Sigmoid colon (tissue), 7 donors: ENCODE measurements at regions of chr10 and their contacts with region 1.

Region 1: DNA sequence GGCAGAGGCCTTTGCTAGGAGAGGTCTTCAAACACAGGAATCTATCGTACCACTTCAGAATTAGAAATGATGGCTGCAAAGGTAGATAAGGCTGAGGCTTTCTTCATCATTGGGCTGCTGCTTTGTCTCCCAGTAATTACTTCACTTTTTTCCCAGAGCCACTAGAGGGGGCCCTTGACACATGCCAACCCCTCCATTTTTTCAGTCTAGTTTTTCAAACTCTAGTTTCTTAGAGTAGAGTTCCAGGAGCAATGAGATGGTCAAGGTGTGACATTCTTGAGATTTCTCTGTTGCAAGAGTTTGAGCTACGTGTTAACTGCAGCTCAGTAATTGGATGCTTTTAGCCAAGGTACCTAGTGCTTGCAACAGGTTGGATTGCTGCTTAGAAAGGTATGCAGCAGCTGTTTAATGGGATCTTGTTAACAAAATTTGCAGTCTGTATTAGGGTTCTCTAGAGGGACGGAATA is 33.8 kb upstream of the RBM20 start:
- DNase-seq: no peak
- H3K4me3 ChIP-seq: no peak overlapping the region
- H3K27ac ChIP-seq: no peak overlapping the region
- H3K4me1 ChIP-seq: no peaks in the 10 kb centered on the region
- H3K27me3 ChIP-seq: no peaks in the 10 kb centered on the region
- CTCF ChIP-seq: peak; percentile 38 to 82 (median 66)
- EP300 ChIP-seq: no peak
- POLR2A ChIP-seq: no peak

Region 2: DNA sequence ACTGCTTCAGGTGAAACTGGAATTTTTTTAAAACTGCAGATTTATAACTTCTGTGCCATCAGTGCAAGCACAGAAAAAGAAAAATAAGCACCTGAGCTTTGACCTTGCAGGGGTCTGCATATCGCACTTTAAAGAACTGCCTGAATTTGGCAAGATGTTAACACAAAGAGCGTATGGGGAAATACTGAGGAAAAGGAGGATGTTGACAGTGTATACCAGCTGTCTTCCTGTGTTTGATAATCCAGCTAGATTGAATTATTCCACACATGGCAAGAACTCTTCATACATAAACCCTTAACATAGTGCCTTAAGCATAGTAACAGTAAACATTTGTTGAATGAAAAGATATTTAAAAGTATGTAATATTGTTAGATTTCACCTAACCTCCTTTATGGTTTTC is 12.9 kb before region 1 on chr10:
- intact Hi-C with region 1: no loop called
- DNase-seq: no peak
- H3K4me3 ChIP-seq: no peak overlapping the region
- H3K27ac ChIP-seq: no peak overlapping the region
- H3K4me1 ChIP-seq: peaks cover 0 to 3% (median 0%) of the 10 kb centered on the region in 4 donors
- H3K27me3 ChIP-seq: no peaks in the 10 kb centered on the region
- CTCF ChIP-seq: no peak
- EP300 ChIP-seq: no peak
- POLR2A ChIP-seq: no peak

Region 3: DNA sequence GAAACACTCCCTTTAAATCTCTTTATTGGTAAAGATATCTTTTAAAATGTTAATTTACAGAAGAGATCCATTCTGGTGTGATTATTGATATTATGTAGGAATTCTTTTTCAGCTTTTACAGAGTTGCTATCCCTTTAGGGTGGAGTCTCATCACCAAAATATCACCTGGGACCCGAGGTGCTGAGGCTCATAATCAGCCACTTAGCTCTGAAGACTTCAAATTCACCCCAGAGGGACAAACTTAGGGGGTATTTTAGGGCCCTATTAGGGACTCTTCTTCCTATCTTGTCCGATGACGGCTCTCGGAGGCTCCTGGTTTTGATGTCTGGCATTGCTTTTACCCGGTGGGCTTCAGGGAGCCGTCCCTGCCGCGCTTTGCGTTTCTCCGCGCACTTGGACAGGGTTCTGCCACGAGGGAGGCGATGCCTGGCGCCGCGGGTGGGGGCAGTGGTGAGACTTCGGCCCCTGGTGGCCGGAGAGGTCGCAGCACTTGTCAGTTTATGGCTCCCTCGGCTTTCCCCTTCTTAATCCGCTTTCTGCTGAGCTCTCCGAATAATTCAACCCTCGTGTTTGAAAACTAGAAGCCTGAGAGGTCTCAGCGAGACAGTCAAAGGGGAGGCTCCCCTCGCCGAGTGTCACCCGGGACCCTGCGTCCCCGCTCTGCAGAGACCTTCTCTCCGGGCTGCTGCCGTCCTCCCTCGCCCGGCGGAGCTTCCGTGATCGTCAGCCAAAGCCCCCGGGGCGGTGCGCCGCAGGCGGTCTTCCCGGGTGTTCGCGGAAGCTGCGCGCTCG is 61.6 kb after region 1 on chr10:
- intact Hi-C with region 1: loop called (anchors 2 kb)
- DNase-seq: peak; percentile 84
- H3K4me3 ChIP-seq: peak overlapping the region; percentile 39 to 67 (median 56)
- H3K27ac ChIP-seq: peak overlapping the region; percentile 54 to 82 (median 78)
- H3K4me1 ChIP-seq: peaks cover 0 to 58% (median 30%) of the 10 kb centered on the region in 4 donors
- H3K27me3 ChIP-seq: no peaks in the 10 kb centered on the region
- CTCF ChIP-seq: peak; percentile 63 to 96 (median 84)
- EP300 ChIP-seq: no peak
- POLR2A ChIP-seq: no peak

Region 4: DNA sequence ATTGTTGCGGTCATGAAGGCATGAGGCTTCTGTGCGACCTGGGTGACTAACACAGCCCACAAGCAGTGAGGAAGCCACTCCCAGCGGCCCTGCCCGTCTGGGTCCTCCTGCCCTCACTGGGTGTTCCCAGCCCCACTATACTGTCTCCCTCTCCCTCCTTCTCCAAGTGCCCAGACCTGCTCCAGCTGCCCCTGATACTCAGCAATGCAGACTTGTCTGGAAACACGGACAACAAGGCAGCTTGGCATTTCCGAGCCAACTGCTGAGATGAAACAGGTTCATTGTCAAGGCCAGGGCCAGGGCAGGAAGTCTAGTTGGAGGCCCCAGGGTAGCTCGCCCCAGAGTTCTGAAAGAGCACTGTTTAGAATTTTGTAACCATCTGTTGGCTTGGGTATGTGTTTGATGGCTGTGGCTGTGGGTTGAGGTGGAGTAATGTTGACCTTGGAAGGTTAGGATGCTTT is 129.5 kb after region 1 on chr10:
- intact Hi-C with region 1: loop called (anchors 5 kb)
- DNase-seq: no peak
- H3K4me3 ChIP-seq: no peak overlapping the region
- H3K27ac ChIP-seq: peak overlapping the region in 2 of 4 donors; percentile 20 to 25
- H3K4me1 ChIP-seq: peaks cover 0 to 13% (median 4%) of the 10 kb centered on the region in 4 donors
- H3K27me3 ChIP-seq: no peaks in the 10 kb centered on the region
- CTCF ChIP-seq: no peak
- EP300 ChIP-seq: no peak
- POLR2A ChIP-seq: no peak

Region 5: DNA sequence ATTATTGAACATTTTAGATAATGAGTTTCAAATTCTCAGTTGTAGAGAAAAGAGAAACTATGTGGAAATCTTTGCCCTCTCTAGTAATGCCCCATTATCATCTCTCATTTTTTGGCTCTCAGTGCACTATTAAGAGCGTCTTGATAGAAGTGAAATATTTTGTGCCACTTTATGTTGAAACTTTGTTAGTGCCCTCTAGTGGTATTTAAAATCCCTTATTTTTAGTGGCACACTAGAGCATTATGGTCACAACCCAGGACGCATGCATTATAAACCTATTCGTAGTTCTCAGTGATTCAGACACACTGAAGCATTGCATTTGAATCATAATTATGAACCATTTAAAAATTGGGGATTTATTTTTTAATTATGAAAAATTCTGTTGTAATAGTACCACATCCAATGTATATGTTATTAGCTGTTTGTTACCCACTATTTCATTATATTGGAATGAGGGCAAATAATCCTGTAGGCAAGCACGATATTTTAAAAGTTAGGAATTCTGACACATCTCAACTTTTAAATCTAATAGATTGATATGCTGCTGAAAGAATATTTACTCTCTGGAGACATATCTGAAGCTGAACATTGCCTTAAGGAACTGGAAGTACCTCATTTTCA is 283.3 kb after region 1 on chr10:
- intact Hi-C with region 1: loop called (anchors 5 kb)
- DNase-seq: no peak
- H3K4me3 ChIP-seq: no peak overlapping the region
- H3K27ac ChIP-seq: peak overlapping the region in 2 of 4 donors; percentile 48 to 50
- H3K4me1 ChIP-seq: peaks cover 0 to 51% (median 39%) of the 10 kb centered on the region in 4 donors
- H3K27me3 ChIP-seq: no peaks in the 10 kb centered on the region
- CTCF ChIP-seq: peak; percentile 18 to 58 (median 46)
- EP300 ChIP-seq: no peak
- POLR2A ChIP-seq: no peak